ENCODE measurements at regions of chr14 and their contacts with region 1.

Region 1: DNA sequence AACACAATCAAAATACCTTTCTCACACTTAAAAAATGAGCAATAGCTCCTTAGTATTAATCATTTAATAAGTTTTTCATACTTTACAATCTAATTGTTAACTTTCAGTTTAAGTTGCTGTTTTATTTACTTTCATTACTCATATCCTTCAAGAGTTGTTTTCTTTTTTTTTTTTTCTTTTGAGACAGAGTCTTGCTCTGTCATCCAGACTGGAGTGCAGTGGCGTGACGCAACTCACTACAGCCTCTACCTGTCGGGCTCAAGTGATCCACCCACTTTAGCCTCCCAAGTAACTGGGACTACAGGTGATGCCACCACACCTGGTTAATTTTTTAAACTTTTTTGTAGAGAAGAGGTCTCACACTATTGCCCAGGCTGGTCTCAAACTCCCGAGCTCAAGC is 16.1 kb downstream of the ZBTB1 start:
- DNase-seq: peak; percentile 76
- ATAC-seq: peak; percentile 95
- H3K4me3 ChIP-seq: no peak overlapping the region; the same call in 1 of the 2 replicates
- H3K27ac ChIP-seq: peak overlapping the region; percentile 73
- H3K4me1 ChIP-seq: peaks cover 9% of the 10 kb centered on the region
- H3K27me3 ChIP-seq: no peaks in the 10 kb centered on the region
- CTCF ChIP-seq: no peak

Region 2: DNA sequence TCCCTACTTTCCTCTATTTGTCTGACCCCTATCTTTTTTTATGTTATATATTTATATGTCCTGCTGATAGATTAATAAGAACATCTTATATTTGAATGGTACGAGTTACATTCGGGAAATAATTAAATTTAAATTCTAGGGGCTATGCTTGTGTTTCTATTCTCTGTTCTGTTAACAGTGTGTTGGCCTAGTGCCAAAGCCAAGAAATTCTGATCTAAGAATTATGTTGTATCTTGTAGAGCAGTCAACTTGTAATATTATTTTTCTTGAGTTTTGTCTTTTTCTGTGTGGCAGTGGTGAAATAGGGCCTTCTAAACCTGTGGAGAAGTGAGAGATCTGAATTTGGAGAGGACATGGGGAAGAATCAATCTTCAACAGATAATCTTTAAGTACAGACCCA is 10.9 kb after region 1 on chr14:
- CTCF ChIA-PET with region 1: no interaction called
- POLR2A ChIA-PET with region 1: no interaction called
- intact Hi-C with region 1: loop called (anchors 1 kb)
- DNase-seq: no peak
- ATAC-seq: no peak
- H3K4me3 ChIP-seq: no peak overlapping the region
- H3K27ac ChIP-seq: no peak overlapping the region
- H3K4me1 ChIP-seq: peaks cover 22% of the 10 kb centered on the region
- H3K27me3 ChIP-seq: no peaks in the 10 kb centered on the region
- CTCF ChIP-seq: no peak

Region 3: GRCh38 chr14:64563696-64564095 is 43.0 kb after region 1 on chr14:
- CTCF ChIA-PET with region 1: interaction called, 10 read pairs
- POLR2A ChIA-PET with region 1: no interaction called
- intact Hi-C with region 1: no loop called
- DNase-seq: no peak
- ATAC-seq: no peak
- H3K4me3 ChIP-seq: no peak overlapping the region
- H3K27ac ChIP-seq: no peak overlapping the region
- H3K4me1 ChIP-seq: peaks cover 3% of the 10 kb centered on the region; the same call in 1 of the 2 replicates
- H3K27me3 ChIP-seq: no peaks in the 10 kb centered on the region
- CTCF ChIP-seq: no peak

Measured in PC-3 (cell line).